ENCODE measurements at regions of chr20 and their contacts with region 1.

Region 1: DNA sequence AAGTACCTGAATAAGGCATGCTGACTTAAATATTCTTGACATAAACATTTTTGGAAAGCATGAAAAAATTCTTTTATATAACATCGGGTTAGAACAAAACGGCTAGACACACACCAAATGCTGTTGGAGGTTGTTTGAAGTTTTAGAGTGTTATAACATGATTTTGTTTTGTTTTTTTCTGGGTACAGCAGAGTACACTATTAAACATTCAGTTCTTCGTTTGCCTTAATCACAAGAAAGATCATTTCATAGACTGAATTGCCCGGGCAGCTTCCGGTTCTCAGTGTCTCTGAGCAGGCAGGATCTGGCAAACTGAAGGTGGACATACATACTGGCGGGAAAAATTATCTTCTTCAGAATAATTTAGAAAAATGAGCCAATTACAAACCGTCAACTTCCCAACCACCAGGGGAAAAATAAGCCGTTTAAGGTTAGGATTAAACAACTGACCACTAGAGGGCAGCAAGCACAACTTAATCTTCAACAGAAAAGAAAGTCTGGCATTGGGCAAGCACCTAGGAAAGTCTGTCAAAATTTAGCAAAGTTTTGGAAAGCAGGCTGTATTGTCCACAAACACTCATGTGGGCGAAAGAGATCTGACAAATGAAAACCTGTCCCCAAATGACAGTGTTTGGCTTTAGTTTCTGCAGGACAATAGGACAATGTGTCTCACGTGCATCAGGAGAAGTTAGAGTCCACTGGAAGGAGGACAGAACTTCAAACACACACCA is 15.0 kb downstream of the ZNF217 start:
- DNase-seq: peak; percentile 90
- H3K4me3 ChIP-seq: peak overlapping the region in 1 of 3 experiments; percentile 23
- H3K27ac ChIP-seq: peak overlapping the region; percentile 43
- H3K4me1 ChIP-seq: peaks cover 20% of the 10 kb centered on the region
- H3K27me3 ChIP-seq: no peaks in the 10 kb centered on the region
- CTCF ChIP-seq: peak; percentile 60 to 75
- POLR2A ChIP-seq: peak; percentile 13

Region 2: GRCh38 chr20:53513301-53514298 is 65.1 kb before region 1 on chr20:
- CTCF ChIA-PET with region 1: no interaction called
- POLR2A ChIA-PET with region 1: no interaction called
- dilution Hi-C with region 1: no loop called
- intact Hi-C with region 1: no loop called
- DNase-seq: no peak
- H3K4me3 ChIP-seq: no peak overlapping the region
- H3K27ac ChIP-seq: no peak overlapping the region
- H3K4me1 ChIP-seq: no peaks in the 10 kb centered on the region
- H3K27me3 ChIP-seq: no peaks in the 10 kb centered on the region
- CTCF ChIP-seq: no peak
- POLR2A ChIP-seq: no peak

Region 3: GRCh38 chr20:53643031-53643832 is 64.6 kb after region 1 on chr20:
- CTCF ChIA-PET with region 1: interaction called, 4 read pairs
- POLR2A ChIA-PET with region 1: no interaction called
- dilution Hi-C with region 1: no loop called
- intact Hi-C with region 1: loop called (anchors 2 kb)
- DNase-seq: peak; percentile 91
- H3K4me3 ChIP-seq: peak overlapping the region in 1 of 3 experiments; percentile 28
- H3K27ac ChIP-seq: peak overlapping the region; percentile 89
- H3K4me1 ChIP-seq: peaks cover 20% of the 10 kb centered on the region
- H3K27me3 ChIP-seq: no peaks in the 10 kb centered on the region
- CTCF ChIP-seq: no peak
- POLR2A ChIP-seq: no peak